ENCODE measurements at regions of chr20 and their contacts with region 1.

Region 1: GRCh38 chr20:3888622-3889488 is at the start of gene PANK2:
- DNase-seq: peak; percentile 99
- H3K4me3 ChIP-seq: peak within 1 kb of the TSS; percentile 84 to 100 (median 99)
- H3K27ac ChIP-seq: peak within 1 kb of the TSS; percentile 98 to 99 (median 98)
- H3K4me1 ChIP-seq: peaks cover 43 to 57% (median 50%) of the 10 kb centered on the region in 4 donors
- H3K27me3 ChIP-seq: no peaks in the 10 kb centered on the region
- CTCF ChIP-seq: peak; percentile 41 to 60 (median 57)
- EP300 ChIP-seq: no peak
- POLR2A ChIP-seq: peak; percentile 94
- total RNA-seq, gene PANK2: 42.8 to 52.1 (median 46.6) TPM

Region 2: DNA sequence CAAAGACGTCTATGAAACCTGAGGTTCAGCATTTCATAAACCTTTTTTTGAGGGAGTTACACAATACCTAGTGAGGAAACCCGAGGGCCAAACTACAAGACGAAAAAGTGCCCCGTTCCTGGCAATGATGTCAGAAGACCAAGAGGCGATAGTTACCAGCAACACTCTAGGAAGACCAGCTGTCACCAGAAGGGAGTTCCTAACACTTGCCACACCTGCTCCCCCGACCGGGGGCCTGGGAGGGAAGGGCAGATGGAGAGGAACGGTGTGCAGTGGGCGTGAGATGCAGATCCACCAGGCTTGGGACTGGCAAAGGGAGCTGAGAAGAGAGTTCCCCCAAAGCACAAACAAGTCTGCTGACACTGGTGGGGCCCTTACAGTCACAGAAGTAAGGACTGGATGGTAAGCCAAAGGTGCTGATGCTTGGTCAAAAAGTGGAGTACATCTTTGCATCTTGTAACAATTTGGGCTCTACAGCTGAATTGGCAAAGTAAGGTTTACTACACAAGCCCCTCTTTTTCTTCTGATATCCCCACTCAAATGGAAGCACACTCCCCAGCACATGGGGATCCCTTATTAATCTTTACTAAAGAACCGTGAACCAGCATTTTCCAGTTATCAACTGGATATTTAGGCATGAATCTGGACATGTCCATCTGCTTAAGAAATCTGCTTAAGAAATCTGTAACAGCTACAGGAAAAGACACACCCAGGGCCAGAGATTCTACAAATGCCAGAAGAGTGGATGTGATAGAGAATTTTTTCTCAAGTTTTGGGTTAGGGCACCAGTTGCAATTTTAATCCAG is 38.8 kb after region 1 on chr20:
- intact Hi-C with region 1: loop called (anchors 5 kb)
- DNase-seq: no peak
- H3K4me3 ChIP-seq: no peak overlapping the region
- H3K27ac ChIP-seq: peak overlapping the region in 2 of 4 donors; percentile 56 to 58
- H3K4me1 ChIP-seq: peaks cover 16 to 49% (median 39%) of the 10 kb centered on the region in 4 donors
- H3K27me3 ChIP-seq: no peaks in the 10 kb centered on the region
- CTCF ChIP-seq: no peak
- EP300 ChIP-seq: no peak
- POLR2A ChIP-seq: no peak

Region 3: GRCh38 chr20:3970016-3970415 is 81.2 kb after region 1 on chr20:
- intact Hi-C with region 1: no loop called
- DNase-seq: no peak
- H3K4me3 ChIP-seq: no peak overlapping the region
- H3K27ac ChIP-seq: no peak overlapping the region
- H3K4me1 ChIP-seq: peaks cover 0 to 4% (median 0%) of the 10 kb centered on the region in 4 donors
- H3K27me3 ChIP-seq: no peaks in the 10 kb centered on the region
- CTCF ChIP-seq: no peak
- EP300 ChIP-seq: no peak
- POLR2A ChIP-seq: no peak

Region 4: DNA sequence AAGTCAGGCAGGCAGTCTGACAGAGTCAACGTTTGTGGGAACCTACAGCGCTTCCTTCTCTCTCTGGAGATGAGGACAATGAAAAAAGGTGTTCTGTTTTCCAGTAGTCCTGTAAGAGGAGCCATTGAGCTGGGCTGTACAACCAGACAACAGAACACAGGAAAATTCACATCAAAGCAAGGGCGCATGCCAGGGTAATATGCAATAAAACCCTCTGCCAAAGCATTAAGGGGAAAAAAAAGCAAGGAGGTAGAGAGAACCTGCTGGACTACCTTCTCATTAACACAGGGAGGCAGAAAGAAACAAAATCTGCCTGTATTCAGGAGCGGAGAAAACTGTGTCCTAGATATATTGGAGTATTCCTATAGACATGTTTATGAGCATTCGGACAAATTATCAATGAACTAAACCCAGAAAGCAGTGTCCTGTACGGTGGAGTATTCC is 125.2 kb after region 1 on chr20:
- intact Hi-C with region 1: loop called (anchors 10 kb)
- DNase-seq: no peak
- H3K4me3 ChIP-seq: peak overlapping the region; percentile 60 to 98 (median 96)
- H3K27ac ChIP-seq: peak overlapping the region; percentile 85 to 91 (median 90)
- H3K4me1 ChIP-seq: peaks cover 10 to 43% (median 38%) of the 10 kb centered on the region in 4 donors
- H3K27me3 ChIP-seq: no peaks in the 10 kb centered on the region
- CTCF ChIP-seq: peak; percentile 48 to 62 (median 51)
- EP300 ChIP-seq: no peak
- POLR2A ChIP-seq: no peak

Region 5: DNA sequence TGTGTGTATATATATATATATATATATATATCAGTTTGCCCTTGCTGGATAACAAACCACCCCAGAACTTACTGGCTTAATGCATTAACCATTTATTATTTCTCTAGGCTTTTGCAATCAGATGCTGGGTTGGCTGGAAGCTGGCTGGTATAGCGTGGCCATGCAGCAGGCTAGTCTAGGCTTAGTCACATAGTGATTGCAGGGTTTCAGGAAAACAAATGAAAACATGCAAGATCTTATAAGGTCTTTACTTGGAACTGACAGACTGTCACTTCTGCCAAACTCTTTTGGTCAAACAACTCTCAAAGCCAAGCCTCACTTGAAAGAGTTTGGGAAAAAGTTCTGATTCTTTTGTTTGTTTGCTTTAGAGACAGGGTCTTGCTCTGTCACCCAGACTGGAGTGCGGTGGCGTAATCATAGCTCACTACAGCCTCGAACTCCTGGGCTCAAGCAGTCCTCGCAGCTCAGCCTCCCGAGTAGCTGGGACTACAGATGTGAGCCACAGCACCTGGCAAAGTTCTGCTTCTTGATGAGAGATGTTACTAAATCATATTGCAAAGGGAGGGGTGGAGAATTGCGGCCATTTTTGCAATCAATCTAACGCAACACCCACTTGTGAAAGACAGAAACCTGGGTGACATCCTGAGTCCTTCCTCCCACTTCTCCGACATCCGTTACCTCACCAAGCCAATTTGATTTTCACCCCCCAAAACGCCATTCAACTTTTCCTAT is 201.1 kb after region 1 on chr20:
- intact Hi-C with region 1: loop called (anchors 5 kb)
- DNase-seq: no peak
- H3K4me3 ChIP-seq: no peak overlapping the region
- H3K27ac ChIP-seq: no peak overlapping the region
- H3K4me1 ChIP-seq: peaks cover 2 to 12% (median 7%) of the 10 kb centered on the region in 4 donors
- H3K27me3 ChIP-seq: no peaks in the 10 kb centered on the region
- CTCF ChIP-seq: no peak
- EP300 ChIP-seq: no peak
- POLR2A ChIP-seq: no peak

Measured in esophagus muscularis mucosa (tissue), 4 donors.